Left cardiac atrium (tissue), 4 donors: ENCODE measurements at regions of chr2 and their contacts with region 1.

Region 1: GRCh38 chr2:127591221-127591923 is 54.6 kb upstream of the GPR17 start:
- DNase-seq: peak; percentile 73
- ATAC-seq: peak; percentile 90 to 91

Region 2: GRCh38 chr2:127508631-127509034 is 82.7 kb before region 1 on chr2:
- intact Hi-C with region 1: no loop called
- DNase-seq: peak; percentile 85
- ATAC-seq: peak; percentile 94 to 97

Region 3: DNA sequence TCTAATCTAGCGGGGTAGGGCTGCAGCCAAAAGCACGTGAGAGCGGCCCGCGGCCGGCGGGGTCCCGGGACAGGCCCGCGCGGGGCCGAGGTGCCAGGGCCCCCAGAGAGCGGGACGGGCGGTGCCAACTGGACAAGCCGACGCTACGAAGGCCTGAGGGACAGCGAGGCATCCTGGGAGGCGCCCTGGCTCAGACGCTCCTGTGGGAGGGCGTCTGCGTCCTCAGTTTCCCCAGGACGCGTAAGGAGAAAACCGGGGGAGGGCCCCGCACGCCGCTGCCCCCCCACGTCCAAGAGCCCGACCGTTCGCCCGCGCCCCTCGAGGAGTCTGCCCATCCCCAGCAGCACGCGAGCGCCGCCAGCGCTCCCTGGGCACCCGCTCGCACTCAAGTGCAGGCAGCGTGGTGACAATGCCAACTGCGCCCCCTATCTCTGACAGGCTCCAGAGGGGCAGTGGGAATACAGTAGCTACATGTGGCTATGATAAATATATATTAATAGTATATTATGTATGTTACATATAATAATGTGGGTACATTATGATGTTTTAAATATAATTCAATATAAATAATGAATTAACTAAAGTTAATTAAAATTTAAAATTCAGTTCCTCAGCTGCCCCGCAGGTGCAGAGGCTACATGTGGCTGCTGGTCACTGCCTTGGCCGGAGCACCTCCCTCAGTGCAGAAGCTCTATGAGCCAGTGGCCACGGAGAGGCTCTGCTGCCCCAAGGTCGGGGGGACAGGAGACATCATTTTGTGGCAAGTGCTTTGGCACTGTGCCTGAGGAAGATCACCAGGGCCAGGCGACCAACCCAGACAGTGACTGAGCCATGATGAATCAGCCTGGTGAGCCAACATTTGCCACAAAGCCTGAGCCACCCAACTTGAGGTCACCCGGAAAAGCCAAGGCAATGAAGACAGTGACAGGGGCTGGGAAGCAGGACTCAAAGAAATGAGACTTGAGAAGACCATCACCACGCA is 104.4 kb after region 1 on chr2:
- intact Hi-C with region 1: loop called in 1 of 2 experiments (anchors 10 kb)
- DNase-seq: peak; percentile 85
- ATAC-seq: peak; percentile 78 to 85